Tibial artery (tissue), 4 donors: ENCODE measurements at regions of chr3 and their contacts with region 1.

Region 1: DNA sequence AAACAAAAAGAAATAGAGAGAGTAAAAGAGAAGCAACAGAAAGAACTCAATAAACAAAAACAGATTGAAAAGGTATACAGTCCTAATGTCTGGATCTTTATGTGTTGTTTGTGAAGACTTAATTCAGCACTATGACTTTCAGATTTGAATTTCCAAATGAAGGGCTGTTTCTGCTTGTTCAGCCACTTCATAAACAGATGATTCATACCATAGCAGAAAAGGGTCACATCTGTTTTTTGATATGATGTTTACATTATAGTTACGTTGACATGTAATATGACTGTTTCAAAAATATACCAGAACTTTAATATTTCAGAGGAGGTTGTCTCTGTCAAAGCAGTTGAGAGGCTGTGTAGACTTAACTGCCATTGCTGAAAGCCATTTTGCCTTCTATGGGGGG is 24.1 kb downstream of the ASB14 start:
- DNase-seq: no peak
- H3K4me3 ChIP-seq: no peak overlapping the region
- H3K27ac ChIP-seq: no peak overlapping the region
- H3K4me1 ChIP-seq: no peaks in the 10 kb centered on the region
- H3K27me3 ChIP-seq: no peaks in the 10 kb centered on the region
- CTCF ChIP-seq: no peak

Region 2: DNA sequence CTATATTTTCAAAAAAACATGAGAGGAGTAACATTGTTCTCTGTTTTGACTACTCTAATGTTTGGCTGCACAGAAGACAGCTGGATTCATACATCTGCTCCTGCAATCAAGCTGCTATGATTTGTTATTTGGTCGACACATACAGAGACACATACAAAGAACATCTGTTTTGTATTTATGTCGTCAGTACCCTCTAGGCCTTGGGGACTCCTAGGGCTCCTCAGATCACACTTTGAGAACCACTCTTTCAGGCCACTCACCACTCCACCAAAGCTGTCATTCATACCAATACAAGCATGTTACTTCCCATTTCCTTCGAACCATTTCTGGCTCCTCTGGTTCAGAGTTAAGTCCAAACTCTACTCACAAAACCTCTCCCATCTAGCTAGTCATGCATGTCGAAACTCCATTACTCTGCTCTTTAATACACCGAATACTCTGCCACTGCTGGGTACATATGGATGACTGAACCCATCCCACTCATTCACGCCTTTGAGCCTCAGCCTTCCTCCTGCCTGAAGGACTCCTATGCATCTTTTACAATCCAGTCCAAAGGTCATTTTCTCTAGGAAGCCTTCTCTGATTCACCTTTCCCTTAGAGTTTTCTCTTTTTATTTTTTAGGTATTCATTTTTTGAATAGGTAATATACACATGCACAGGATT is 363.7 kb before region 1 on chr3:
- intact Hi-C with region 1: no loop called
- DNase-seq: no peak
- H3K4me3 ChIP-seq: no peak overlapping the region
- H3K27ac ChIP-seq: no peak overlapping the region
- H3K4me1 ChIP-seq: no peaks in the 10 kb centered on the region
- H3K27me3 ChIP-seq: no peaks in the 10 kb centered on the region
- CTCF ChIP-seq: no peak

Region 3: GRCh38 chr3:56976651-56977560 is 291.5 kb before region 1 on chr3:
- intact Hi-C with region 1: no loop called
- DNase-seq: no peak
- H3K4me3 ChIP-seq: no peak overlapping the region
- H3K27ac ChIP-seq: no peak overlapping the region
- H3K4me1 ChIP-seq: peaks cover 0 to 10% (median 2%) of the 10 kb centered on the region in 4 donors
- H3K27me3 ChIP-seq: no peaks in the 10 kb centered on the region
- CTCF ChIP-seq: no peak

Region 4: GRCh38 chr3:57130571-57131209 is 137.7 kb before region 1 on chr3:
- intact Hi-C with region 1: no loop called
- DNase-seq: no peak
- H3K4me3 ChIP-seq: no peak overlapping the region
- H3K27ac ChIP-seq: no peak overlapping the region
- H3K4me1 ChIP-seq: no peaks in the 10 kb centered on the region
- H3K27me3 ChIP-seq: no peaks in the 10 kb centered on the region
- CTCF ChIP-seq: no peak

Region 5: DNA sequence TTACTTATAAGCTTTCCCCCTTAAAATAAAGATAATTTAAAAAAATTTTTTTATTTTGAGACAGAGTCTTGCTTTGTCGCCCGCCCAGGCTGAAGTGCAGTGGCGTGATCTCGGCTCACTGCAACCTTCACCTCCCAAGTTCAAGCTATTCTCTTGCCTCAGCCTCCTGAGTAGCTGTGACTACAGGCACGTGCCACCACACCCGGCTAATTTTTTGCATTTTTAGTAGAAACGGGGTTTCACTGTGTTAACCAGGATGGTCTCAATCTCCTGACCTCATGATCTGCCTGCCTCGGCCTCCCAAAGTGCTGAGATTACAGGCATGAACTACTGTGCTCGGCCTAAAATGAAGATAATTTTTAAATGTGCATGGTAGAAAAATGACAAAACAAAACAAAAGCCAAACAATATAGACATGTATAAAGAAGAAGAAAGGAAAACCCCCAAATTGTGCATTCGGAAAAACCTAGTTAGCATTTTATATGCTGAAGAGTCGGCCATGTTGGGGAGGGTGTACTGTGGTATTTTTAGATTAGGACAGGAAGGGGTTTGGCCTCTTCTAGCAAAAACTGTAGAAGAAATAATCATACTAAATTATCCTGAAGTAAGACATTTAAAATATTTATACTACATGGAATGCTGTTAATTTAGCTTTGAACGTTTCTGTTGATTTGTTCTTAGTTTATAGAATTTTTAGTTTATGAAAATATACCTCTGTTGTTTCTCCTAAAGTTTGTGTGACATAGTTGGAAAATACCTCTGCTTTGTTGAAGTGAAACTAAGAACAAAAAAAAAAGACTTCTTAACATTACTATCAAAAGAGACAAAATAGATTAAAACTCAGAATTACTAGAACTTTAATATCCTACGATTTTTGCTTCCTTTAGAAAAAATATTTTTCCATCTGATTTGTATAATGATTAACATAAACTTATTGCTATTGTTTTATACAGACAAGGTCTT is 33.5 kb before region 1 on chr3:
- intact Hi-C with region 1: loop called (anchors 5 kb)
- DNase-seq: no peak
- H3K4me3 ChIP-seq: no peak overlapping the region
- H3K27ac ChIP-seq: no peak overlapping the region
- H3K4me1 ChIP-seq: peaks cover 0 to 38% (median 3%) of the 10 kb centered on the region in 4 donors
- H3K27me3 ChIP-seq: no peaks in the 10 kb centered on the region
- CTCF ChIP-seq: no peak